Calu3 (cell line): ENCODE measurements at regions of chr12 and their contacts with region 1.

Region 1: GRCh38 chr12:71780237-71780822 is 25.7 kb downstream of the RAB21 start:
- DNase-seq: peak; percentile 66
- H3K4me3 Mint-ChIP-seq: no peak overlapping the region
- H3K27ac Mint-ChIP-seq: peak overlapping the region; percentile 37
- H3K4me1 Mint-ChIP-seq: no peaks in the 10 kb centered on the region
- H3K27me3 Mint-ChIP-seq: no peaks in the 10 kb centered on the region
- CTCF ChIP-seq: peak; percentile 69

Region 2: DNA sequence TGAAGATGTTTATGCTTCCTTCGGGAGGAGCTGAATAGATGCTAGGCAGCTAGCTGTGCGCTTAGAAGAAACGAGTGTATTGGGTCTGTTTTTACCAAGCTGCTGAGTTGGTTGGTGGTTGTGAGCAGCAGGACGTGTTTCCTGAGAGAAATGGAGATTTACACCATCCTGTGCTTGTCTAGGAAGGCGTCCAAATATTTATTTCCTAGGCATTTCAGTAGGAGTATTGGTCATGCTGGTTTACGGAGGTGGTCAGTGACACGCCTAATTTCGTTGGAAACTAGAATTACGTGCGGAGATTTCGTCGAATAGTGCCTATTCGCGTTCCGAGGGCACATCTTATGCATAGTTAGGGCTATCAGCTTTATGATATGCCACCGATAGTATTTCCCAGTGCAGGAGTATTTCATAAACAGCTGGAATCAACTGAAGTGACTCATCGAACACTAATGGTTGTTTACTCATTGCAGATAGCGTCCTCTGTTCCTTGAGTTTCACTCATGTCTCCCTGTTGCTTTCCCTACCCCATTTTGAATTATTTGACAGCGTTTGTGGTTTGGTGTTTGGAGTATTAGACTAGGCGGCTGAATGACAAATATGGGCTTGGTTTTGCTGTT is 60.0 kb after region 1 on chr12:
- CTCF ChIA-PET with region 1: interaction called, 31 read pairs
- intact Hi-C with region 1: loop called (anchors 1 kb)
- DNase-seq: peak; percentile 19
- H3K4me3 Mint-ChIP-seq: peak overlapping the region; percentile 91
- H3K27ac Mint-ChIP-seq: peak overlapping the region; percentile 99
- H3K4me1 Mint-ChIP-seq: peaks cover 33% of the 10 kb centered on the region
- H3K27me3 Mint-ChIP-seq: no peaks in the 10 kb centered on the region
- CTCF ChIP-seq: no peak

Region 3: DNA sequence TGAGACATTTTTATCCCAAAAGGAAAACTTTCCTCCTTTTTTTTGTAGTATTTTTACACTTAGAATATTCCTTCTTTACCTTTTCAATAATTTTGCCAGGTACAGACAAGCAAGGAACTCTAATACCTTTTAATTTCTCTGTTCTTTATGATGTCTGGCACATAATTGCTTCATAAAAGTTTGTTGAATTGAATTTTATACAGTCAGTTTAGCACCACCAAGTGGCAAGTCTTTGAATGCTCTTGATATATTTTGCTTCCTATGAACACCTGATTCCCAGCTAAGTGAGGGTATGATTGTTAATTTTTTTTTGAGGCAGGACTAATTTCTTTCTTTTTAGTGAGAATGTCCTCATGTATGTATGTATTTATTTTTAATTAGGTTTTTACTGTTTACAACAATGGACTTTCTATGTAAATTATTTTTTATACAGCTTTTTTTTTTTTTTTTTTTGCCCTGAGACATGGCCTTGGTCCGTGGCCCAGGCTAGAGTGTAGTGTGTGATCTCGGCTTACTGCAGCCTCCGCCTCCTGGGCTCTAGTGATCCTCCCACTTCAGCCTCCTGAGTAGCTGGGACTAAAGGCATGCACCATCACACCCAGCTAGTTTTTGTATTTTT is 66.1 kb after region 1 on chr12:
- CTCF ChIA-PET with region 1: interaction called, 31 read pairs
- intact Hi-C with region 1: loop called (anchors 1 kb)
- DNase-seq: peak; percentile 26
- H3K4me3 Mint-ChIP-seq: no peak overlapping the region
- H3K27ac Mint-ChIP-seq: peak overlapping the region; percentile 37
- H3K4me1 Mint-ChIP-seq: no peaks in the 10 kb centered on the region
- H3K27me3 Mint-ChIP-seq: no peaks in the 10 kb centered on the region
- CTCF ChIP-seq: peak; percentile 34

Region 4: GRCh38 chr12:71900091-71900490 is 119.8 kb after region 1 on chr12:
- CTCF ChIA-PET with region 1: no interaction called
- intact Hi-C with region 1: loop called (anchors 1 kb)
- DNase-seq: no peak
- H3K4me3 Mint-ChIP-seq: no peak overlapping the region
- H3K27ac Mint-ChIP-seq: no peak overlapping the region
- H3K4me1 Mint-ChIP-seq: peaks cover 10% of the 10 kb centered on the region
- H3K27me3 Mint-ChIP-seq: no peaks in the 10 kb centered on the region
- CTCF ChIP-seq: no peak

Region 5: GRCh38 chr12:71938728-71939385 is 158.5 kb after region 1 on chr12 and contains the start of gene TPH2:
- CTCF ChIA-PET with region 1: no interaction called
- intact Hi-C with region 1: loop called (anchors 1 kb)
- DNase-seq: peak; percentile 82
- H3K4me3 Mint-ChIP-seq: no peak within 1 kb of the TSS
- H3K27ac Mint-ChIP-seq: no peak within 1 kb of the TSS
- H3K4me1 Mint-ChIP-seq: no peaks in the 10 kb centered on the region
- H3K27me3 Mint-ChIP-seq: peaks cover 51% of the 10 kb centered on the region
- CTCF ChIP-seq: peak; percentile 78
- total RNA-seq, gene TPH2: 0.38 and 0.54 TPM in 2 replicates